ENCODE measurements at regions of chrX and their contacts with region 1.

Region 1: DNA sequence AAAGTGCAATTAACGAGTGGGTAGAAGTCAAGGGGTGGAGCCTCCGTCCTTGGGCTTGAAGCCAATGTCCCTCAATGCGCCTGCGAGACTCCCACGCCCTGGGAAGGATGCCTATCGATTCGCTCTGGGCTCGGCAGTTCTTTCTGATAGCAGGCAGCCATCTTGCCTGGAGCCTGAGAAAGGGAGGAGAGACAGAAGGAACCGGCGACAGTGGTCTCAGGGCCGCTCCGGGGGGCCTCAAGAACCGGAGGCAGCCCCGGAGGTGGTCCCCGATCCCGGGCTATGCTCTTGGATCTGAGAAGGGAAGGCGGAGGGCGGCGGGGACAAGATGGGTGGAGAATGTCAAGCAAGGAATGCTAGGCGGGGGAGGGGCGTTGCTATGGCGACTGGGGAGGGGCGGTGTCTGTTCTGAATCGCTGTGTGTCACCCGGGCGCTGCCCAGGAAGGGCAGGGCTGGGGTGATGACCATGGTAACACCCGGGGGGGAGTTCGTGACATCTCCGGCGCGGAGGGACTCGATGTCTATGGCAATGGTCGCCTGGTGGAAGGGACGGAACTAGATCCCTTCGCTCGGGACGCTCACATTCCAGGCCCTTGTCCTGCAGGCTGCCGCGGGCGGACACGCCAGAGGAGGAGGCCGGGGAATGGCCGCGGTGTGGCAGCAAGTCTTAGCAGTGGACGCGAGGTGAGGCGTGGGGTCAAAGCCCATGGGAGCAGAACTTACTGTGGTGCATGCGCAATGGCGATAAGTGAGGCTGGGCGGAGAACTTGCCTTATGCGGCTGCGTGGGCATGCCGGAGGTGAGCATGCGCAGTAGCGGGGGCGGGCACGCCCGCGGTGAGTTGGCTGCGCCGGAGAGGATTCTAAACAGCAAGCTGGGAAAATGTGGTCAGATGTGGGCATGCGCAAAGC is at the start of gene WDR13:
- DNase-seq: peak; percentile 97
- total RNA-seq, gene WDR13: 83.5 to 87.4 TPM

Region 2: GRCh38 chrX:47247206-47247998 is 1350.2 kb before region 1 on chrX:
- intact Hi-C with region 1: loop called in 1 of 2 experiments (anchors 5 kb)
- DNase-seq: no peak